MCF 10A (cell line): ENCODE measurements at regions of chr9 and their contacts with region 1.

Region 1: GRCh38 chr9:79026316-79026715 is 545.4 kb upstream of the TLE4 start:
- DNase-seq: peak; percentile 67
- H3K4me3 Mint-ChIP-seq: peak overlapping the region; percentile 10
- H3K27ac Mint-ChIP-seq: peak overlapping the region; percentile 78
- H3K4me1 Mint-ChIP-seq: peaks cover 45% of the 10 kb centered on the region
- H3K27me3 Mint-ChIP-seq: no peaks in the 10 kb centered on the region
- CTCF ChIP-seq: no peak

Region 2: GRCh38 chr9:78820855-78821822 is 205.2 kb before region 1 on chr9:
- CTCF ChIA-PET with region 1: interaction called, 3 read pairs
- POLR2A ChIA-PET with region 1: interaction called, 3 read pairs
- intact Hi-C with region 1: loop called (anchors 10 kb)
- DNase-seq: peak; percentile 54
- H3K4me3 Mint-ChIP-seq: peak overlapping the region; percentile 32
- H3K27ac Mint-ChIP-seq: no peak overlapping the region
- H3K4me1 Mint-ChIP-seq: peaks cover 7% of the 10 kb centered on the region
- H3K27me3 Mint-ChIP-seq: no peaks in the 10 kb centered on the region
- CTCF ChIP-seq: peak; percentile 62

Region 3: DNA sequence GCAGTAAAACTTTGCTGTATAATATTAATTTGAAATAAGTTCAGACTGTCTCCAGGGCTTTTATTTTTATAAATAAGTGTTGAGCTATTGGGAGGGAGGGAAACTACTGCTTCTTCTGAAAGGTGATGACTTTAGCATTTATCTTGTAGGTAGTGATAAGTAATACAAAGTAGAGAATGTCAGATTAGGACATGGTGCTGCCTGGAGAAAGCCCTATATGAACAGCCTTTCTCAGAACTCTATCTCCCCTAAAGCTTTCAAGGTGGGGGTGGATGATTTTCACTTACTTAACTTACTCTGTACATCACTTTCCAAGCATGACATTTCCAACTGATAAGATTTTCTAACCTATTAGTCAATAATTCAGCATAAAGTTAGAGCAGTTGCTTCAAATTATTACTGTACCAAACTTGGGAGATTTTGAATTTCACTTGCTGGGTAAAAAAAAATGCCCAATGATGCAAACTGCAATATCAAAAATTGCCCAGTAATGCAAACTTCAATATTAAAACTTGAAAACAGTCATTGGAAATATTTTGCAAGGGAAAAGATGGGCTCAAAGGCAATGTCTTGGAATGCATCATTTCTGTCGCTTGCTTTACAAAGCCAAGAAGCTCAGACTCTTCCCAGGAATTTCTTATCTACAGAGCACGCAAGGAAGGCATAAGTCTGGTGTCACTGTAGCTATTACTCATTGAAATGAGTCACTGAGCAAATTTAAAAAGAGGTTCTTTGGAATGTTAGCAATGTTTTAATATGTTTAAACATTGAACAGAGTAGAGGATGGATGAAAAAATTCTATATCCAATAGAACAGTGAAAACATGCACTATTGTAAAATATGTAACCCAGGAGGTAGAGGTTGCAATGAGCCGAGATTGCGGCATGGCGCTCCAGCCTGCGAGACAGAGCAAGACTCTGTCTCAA is 159.8 kb before region 1 on chr9:
- CTCF ChIA-PET with region 1: no interaction called
- POLR2A ChIA-PET with region 1: interaction called, 6 read pairs
- intact Hi-C with region 1: loop called (anchors 5 kb)
- DNase-seq: peak; percentile 79
- H3K4me3 Mint-ChIP-seq: peak overlapping the region; percentile 11
- H3K27ac Mint-ChIP-seq: peak overlapping the region; percentile 41
- H3K4me1 Mint-ChIP-seq: peaks cover 31% of the 10 kb centered on the region
- H3K27me3 Mint-ChIP-seq: no peaks in the 10 kb centered on the region
- CTCF ChIP-seq: no peak

Region 4: GRCh38 chr9:79014929-79015694 is 11.2 kb before region 1 on chr9:
- CTCF ChIA-PET with region 1: interaction called, 4 read pairs
- POLR2A ChIA-PET with region 1: interaction called, 10 read pairs
- intact Hi-C with region 1: no loop called
- DNase-seq: no peak
- H3K4me3 Mint-ChIP-seq: no peak overlapping the region
- H3K27ac Mint-ChIP-seq: peak overlapping the region; percentile 69
- H3K4me1 Mint-ChIP-seq: peaks cover 27% of the 10 kb centered on the region
- H3K27me3 Mint-ChIP-seq: no peaks in the 10 kb centered on the region
- CTCF ChIP-seq: no peak